Mucosa of descending colon (tissue), 3 donors: ENCODE measurements at regions of chr20 and their contacts with region 1.

Region 1: DNA sequence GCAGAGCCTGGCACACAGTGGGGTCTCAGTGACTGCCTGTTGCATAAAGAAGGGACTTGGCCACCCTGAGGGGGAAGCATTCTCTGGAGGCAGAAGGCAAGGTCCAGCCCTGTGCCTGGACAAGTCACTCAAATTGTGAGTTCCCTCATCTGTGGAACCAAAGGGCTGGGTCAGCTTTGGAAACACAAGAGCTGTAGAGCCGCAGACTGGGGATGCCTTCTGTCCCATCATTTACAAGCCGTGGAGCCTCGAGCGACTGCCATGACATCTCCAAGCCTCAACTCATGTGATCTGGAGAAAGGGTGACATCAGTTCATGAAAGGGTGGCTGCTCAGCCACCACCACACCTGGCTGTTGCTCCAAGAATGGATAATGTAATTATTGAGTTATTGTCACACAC is 20.4 kb upstream of the SIRPD start:
- DNase-seq: no peak
- ATAC-seq: no peak
- H3K4me3 ChIP-seq: no peak overlapping the region
- H3K4me1 ChIP-seq: no peaks in the 10 kb centered on the region
- CTCF ChIP-seq: no peak

Region 2: DNA sequence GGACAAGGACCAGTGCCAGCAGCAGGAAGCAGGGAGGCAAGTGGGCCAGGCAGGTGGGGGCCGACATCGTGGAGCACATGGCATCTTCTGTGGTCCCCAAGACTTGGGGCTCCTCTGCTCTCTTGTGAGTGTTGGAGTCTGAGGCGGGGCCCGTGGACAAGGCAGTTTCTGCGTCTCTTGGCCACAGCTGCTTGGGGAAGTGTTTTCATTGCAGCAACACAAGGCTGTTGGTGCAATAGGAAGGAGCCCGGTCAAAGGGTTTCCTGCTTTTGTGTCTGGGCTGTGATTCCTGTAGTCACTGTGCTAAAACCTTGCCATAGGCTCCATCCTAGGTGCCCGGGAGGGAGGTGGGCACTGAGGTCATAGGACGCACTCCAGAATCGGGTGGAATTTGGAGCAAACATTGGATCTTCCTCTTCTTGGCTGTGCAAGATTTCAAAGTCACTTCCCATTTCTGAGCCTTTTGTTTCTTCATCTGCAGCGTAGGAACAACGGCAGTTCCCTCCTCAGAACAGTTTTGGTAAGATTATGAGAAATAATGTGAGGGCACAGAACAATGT is 86.5 kb before region 1 on chr20 and contains the start of gene SIRPB2:
- intact Hi-C with region 1: no loop called
- DNase-seq: peak in 1 of 3 donors; percentile 55
- ATAC-seq: peak; percentile 36
- H3K4me3 ChIP-seq: no peak within 1 kb of the TSS
- H3K4me1 ChIP-seq: no peaks in the 10 kb centered on the region
- CTCF ChIP-seq: no peak
- total RNA-seq, gene SIRPB2: 0.87 to 5.4 (median 3.4) TPM

Region 3: GRCh38 chr20:1619861-1620444 is 42.0 kb after region 1 on chr20 and contains the start of gene SIRPB1:
- intact Hi-C with region 1: loop called in 1 of 2 experiments (anchors 2 kb)
- DNase-seq: peak in 1 of 3 donors; percentile 29
- ATAC-seq: peak; percentile 55
- H3K4me3 ChIP-seq: no peak within 1 kb of the TSS
- H3K4me1 ChIP-seq: no peaks in the 10 kb centered on the region
- CTCF ChIP-seq: no peak
- total RNA-seq, gene SIRPB1: 6.0 to 8.3 TPM in 2 of 3 donors, not detected in the other